ENCODE measurements at regions of chr2 and their contacts with region 1.

Region 1: GRCh38 chr2:63861220-63861822 is 19.6 kb downstream of the UGP2 start:
- DNase-seq: peak in 4 of 5 donors; percentile 31 to 48 (median 46)
- ATAC-seq: peak in 3 of 4 donors; percentile 61 to 74 (median 71)
- H3K4me3 ChIP-seq: no peak overlapping the region
- H3K27ac ChIP-seq: peak overlapping the region in 2 of 12 donors; percentile 25 to 35
- H3K4me1 ChIP-seq: peaks cover 0 to 39% (median 16%) of the 10 kb centered on the region in 12 donors
- H3K27me3 ChIP-seq: no peaks in the 10 kb centered on the region
- CTCF ChIP-seq: peak; percentile 40 to 76 (median 58)
- POLR2A ChIP-seq: no peak

Region 2: DNA sequence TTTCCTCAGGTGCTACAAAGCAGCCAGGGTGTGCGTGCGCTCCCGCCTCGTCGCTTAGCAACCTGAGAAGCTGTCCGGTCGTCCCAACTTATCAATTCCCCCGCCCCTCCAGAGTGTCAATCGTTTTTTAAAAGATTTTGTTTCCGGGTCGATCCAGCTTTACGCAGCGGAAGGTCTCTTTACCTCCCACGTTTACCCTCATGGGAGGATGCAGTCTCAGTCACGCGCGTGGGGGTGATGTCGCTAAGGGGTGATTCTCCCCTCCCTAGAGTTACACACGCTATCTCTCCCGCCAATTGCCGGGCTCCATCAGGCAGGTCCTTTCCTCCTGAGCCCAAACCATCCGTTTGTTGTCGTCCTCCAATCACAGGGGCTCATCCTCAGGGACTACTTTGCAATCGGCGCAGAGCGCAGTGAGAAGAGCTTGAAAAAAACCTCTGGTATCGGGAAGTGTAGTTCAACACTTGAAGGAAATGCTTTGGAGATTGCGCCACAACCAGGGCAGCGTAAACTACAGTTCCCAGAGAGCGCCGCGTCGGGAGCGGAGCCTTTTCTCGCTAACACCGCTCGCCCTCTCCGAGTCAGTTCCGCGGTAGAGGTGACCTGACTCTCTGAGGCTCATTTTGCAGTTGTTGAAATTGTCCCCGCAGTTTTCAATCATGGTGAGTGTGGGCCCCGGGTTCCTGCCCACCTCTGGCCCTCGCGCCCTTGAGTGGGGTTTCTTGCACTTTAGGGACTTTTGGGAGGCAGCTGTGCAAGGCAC is 272.8 kb before region 1 on chr2 and contains the starts of genes MDH1 and WDPCP:
- intact Hi-C with region 1: loop called in 1 of 10 experiments (anchors 10 kb)
- DNase-seq: peak; percentile 93 to 97 (median 95)
- ATAC-seq: peak; percentile 93 to 95 (median 93)
- H3K4me3 ChIP-seq: peak within 1 kb of the TSS; percentile 50 to 93 (median 82)
- H3K27ac ChIP-seq: peak within 1 kb of the TSS; percentile 82 to 98 (median 94)
- H3K4me1 ChIP-seq: peaks cover 0 to 49% (median 32%) of the 10 kb centered on the region in 12 donors
- H3K27me3 ChIP-seq: no peaks in the 10 kb centered on the region
- CTCF ChIP-seq: no peak
- POLR2A ChIP-seq: peak; percentile 75 to 87
- total RNA-seq, gene MDH1: 862 to 1,901 (median 1,395) TPM
- total RNA-seq, gene WDPCP: 13.9 to 32.2 (median 16.6) TPM

Region 3: DNA sequence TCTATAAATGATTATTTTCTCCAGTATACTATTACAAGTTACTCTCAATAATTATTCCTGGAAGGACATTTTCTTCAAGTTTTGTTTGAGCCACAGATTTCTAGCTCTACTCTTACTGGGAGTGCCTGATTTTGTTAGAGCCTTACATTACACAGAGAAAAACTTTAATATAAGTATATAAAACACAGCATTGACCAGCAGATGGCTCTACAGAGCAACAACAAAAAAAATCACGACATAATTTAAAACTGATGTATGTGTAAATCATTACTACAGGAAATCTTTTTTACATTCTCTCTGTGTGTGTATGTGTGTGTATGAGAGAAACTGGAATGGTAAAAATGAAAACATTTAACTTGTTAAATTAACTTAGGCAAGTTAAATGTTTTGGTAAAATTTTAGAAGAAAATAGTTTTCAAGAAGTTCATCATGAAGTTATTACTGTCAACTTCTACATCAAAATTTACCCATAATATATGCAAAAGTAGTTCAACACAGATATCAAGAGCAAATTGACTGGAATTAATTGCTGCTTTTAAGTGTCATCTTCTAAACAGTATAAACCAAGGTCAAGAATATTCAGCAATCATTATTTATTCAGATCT is 169.2 kb before region 1 on chr2:
- intact Hi-C with region 1: loop called (anchors 2 to 10 kb)
- DNase-seq: no peak
- ATAC-seq: peak in 1 of 4 donors; percentile 28
- H3K4me3 ChIP-seq: no peak overlapping the region
- H3K27ac ChIP-seq: no peak overlapping the region
- H3K4me1 ChIP-seq: peaks cover 0 to 4% (median 0%) of the 10 kb centered on the region in 12 donors
- H3K27me3 ChIP-seq: no peaks in the 10 kb centered on the region
- CTCF ChIP-seq: peak; percentile 38 to 72 (median 62)
- POLR2A ChIP-seq: no peak